Gastrocnemius medialis (tissue), 4 donors: ENCODE measurements at regions of chr6 and their contacts with region 1.

Region 1: DNA sequence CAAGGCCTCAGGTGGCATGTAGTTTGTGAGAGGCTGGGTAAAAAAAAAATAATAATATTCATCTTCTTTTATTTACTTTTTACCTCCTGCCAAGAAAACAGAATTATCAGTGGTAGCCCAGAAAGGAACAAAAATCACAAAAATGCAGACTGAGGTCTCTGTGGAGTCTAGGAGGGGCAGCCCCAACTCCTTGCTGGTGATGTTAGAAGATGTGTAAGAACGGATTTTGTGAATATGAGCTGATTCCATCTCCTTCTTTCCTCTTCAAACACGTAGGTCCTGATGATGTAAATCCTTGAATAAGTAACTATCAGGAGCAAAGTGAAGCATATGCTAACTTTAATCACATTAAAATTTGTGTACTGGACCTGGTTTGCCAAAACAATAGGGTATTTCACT is 226.8 kb downstream of the EYA4 start:
- DNase-seq: no peak
- ATAC-seq: no peak
- H3K4me3 ChIP-seq: no peak overlapping the region
- H3K27ac ChIP-seq: no peak overlapping the region
- H3K4me1 ChIP-seq: no peaks in the 10 kb centered on the region
- H3K27me3 ChIP-seq: no peaks in the 10 kb centered on the region
- CTCF ChIP-seq: no peak
- POLR2A ChIP-seq: no peak

Region 2: GRCh38 chr6:133436652-133437051 is 31.3 kb before region 1 on chr6:
- in situ Hi-C with region 1: no loop called
- intact Hi-C with region 1: no loop called
- DNase-seq: no peak
- ATAC-seq: no peak
- H3K4me3 ChIP-seq: no peak overlapping the region
- H3K27ac ChIP-seq: peak overlapping the region; percentile 85 to 89 (median 87)
- H3K4me1 ChIP-seq: peaks cover 45 to 65% of the 10 kb centered on the region in 2 donors
- H3K27me3 ChIP-seq: no peaks in the 10 kb centered on the region
- CTCF ChIP-seq: no peak
- POLR2A ChIP-seq: no peak

Region 3: GRCh38 chr6:133447924-133448323 is 20.1 kb before region 1 on chr6:
- in situ Hi-C with region 1: no loop called
- intact Hi-C with region 1: loop called (anchors 2 kb)
- DNase-seq: no peak
- ATAC-seq: no peak
- H3K4me3 ChIP-seq: no peak overlapping the region
- H3K27ac ChIP-seq: no peak overlapping the region
- H3K4me1 ChIP-seq: no peaks in the 10 kb centered on the region
- H3K27me3 ChIP-seq: no peaks in the 10 kb centered on the region
- CTCF ChIP-seq: no peak
- POLR2A ChIP-seq: no peak